ENCODE measurements at regions of chr11 and their contacts with region 1.

Region 1: DNA sequence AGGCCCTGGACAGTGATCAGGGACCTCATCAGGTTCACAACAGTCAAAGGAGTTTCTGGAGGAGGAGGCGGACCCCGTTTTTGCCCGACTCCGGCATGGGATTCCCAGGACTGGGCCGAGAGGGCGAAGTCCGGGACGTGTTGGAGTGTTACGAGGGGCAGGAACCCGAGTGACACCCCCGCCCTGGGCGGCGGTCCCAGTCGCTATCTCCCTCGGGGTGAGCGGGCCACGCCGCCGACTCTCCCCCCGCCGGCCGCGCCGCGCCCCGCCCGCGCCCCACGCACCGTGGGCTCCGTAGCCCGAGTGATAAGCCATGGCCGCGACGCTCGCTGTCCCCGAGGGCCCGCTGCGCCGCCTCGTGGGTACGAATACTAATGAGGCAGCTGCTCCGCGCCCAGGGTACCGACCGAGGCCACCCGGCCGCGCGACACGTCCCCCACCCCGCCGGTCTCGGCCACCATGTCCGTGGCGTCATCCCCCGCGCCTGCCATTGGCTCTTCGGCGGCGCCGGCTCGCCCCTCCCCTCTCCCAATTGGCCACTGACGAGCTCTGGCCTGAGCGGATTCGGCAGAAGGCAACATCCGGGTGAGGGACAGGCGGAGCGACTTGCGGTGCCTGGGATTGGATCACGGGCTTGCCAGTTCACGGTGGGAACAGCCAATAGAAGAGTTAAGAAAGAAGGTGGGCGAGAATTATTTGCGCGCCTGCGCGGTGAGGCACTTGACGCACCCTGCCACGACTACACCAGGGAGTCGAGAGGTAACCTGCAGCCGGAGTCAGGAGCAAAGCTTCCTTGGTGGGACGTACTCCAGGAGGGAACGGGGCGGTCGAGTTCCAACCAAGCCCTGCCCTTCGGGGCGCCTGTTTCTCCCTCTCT is at the start of gene YIF1A:
- DNase-seq: peak; percentile 97 to 100 (median 99)
- H3K4me3 ChIP-seq: peak within 1 kb of the TSS; percentile 68 to 99 (median 91)
- H3K27ac ChIP-seq: peak within 1 kb of the TSS; percentile 89 to 100 (median 99)
- H3K27me3 ChIP-seq: peaks cover 0 to 7% (median 0%) of the 10 kb centered on the region in 45 donors
- CTCF ChIP-seq: peak in 38 of 56 donors; percentile 3 to 65 (median 40)
- total RNA-seq, gene YIF1A: 15.9 to 71.3 (median 33.4) TPM

Region 2: DNA sequence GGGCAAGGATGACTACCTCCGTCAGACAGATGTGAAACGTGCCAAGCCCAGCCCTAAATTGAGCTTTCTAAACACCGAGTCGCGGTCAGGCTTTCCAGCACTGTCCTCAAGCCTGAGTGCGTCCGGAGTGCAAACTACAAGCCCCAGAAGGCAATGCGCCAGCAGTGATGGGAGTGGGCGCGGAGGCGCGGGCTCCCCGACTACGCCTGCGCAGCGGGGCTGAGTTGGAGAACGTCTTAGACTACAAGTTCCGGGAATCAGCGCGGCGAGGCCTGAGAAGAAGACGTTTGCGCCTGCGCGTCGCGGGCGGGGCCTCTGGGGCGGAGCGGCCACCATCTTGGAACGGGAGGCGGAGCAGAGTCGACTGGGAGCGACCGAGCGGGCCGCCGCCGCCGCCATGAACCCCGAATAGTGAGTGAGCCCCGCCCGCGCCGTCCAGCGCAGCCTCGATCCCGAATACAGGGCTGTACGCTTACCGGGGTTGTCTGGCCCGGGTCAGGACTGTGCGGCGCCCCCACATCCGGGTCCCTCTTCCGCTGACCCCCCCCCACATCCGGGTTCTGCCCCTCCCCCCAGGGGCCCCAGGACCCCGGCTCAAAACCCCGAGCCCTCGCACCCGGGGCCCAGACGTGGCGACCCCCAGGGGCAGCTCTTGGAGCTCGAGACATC is 20.5 kb before region 1 on chr11 and contains the start of gene RAB1B:
- intact Hi-C with region 1: loop called (anchors 2 kb)
- DNase-seq: peak; percentile 99 to 100 (median 99)
- H3K4me3 ChIP-seq: peak within 1 kb of the TSS; percentile 65 to 100 (median 91)
- H3K27ac ChIP-seq: peak within 1 kb of the TSS; percentile 89 to 100 (median 98)
- H3K27me3 ChIP-seq: no peaks in the 10 kb centered on the region
- CTCF ChIP-seq: peak in 8 of 56 donors; percentile 3 to 42 (median 12)
- total RNA-seq, gene RAB1B: 94.3 to 135 (median 115) TPM

Region 3: DNA sequence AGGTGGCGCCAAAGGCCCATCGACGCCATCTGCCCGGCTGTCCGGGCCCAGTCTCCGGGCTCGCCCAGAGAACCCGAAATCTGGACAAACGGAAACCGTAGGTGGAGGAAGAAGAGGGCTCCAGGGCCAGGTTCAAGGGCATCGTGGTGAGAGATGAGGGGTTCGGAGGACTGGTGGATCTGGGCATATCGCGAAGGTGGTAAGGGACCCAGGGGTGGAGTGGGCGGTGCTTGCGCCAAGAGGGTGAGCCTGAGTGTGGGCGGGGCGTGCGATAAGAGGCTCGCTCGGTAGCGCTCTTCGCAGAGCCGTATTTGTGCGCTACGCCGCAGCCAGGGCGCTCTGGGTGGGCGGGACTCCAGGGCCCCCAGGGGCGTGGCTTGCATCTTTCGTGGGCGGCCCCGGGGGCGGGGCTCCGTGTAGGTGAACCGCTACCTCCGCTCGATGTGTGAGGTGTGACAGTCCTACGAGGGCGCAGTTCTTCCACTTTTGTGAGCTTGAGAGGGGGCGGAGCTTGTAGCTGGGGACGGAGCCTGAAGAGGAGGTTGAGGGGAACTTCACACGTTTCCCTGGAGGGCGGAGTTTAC is 23.1 kb after region 1 on chr11:
- intact Hi-C with region 1: loop called in 1 of 2 experiments (anchors 1 kb)
- DNase-seq: peak; percentile 68 to 94 (median 88)
- H3K4me3 ChIP-seq: peak overlapping the region; percentile 40 to 84 (median 67)
- H3K27ac ChIP-seq: peak overlapping the region; percentile 26 to 95 (median 86)
- H3K27me3 ChIP-seq: no peaks in the 10 kb centered on the region
- CTCF ChIP-seq: peak in 53 of 56 donors; percentile 4 to 96 (median 85)

Region 4: DNA sequence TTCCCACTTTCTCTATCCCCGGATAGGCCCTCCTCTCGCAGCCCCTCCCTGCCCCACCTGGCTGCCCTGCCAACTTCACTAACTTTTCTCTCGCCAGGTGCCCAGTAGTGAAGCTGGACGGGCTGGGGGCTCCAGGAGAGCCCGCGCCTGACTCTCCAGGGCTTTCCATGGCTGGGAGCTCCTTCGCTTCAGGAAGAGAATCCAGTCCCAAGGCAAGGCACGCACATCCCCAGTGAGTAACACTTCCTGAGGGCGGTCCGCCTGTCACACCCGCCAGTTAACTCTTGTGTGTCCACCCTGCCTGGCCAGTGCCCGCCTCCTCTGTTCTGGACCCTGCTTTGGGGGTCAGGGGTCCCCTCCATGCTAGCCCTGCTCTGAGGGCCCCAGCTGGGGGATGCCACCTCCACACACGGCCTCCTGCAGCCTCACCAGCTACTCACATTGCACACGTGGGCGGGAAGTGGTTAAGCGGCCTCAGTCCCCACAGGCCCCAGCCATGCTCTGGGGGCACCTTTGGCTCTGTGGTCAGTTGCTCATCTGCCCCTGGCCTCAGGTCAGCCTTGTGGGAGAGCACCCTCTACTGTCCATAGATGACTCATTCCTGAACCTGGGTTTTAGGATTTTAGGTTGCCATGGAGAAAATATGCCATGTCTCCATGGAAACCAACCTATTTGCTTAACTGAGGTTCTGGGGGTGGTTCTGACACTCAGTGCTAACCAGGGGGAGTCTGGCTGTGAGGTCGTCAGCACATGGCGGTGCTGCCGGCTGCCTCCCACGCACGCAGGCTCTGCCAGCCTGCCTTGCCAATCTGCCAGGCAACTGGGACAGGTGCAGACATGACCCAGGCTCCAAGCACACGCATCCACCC is 47.6 kb after region 1 on chr11 and contains the start of gene RIN1:
- intact Hi-C with region 1: loop called in 1 of 2 experiments (anchors 5 kb)
- DNase-seq: peak in 9 of 10 donors; percentile 51 to 90 (median 78)
- H3K4me3 ChIP-seq: peak within 1 kb of the TSS in 58 of 59 donors; percentile 21 to 72 (median 61)
- H3K27ac ChIP-seq: peak within 1 kb of the TSS in 57 of 59 donors; percentile 26 to 91 (median 77)
- H3K27me3 ChIP-seq: no peaks in the 10 kb centered on the region
- CTCF ChIP-seq: peak in 50 of 56 donors; percentile 17 to 61 (median 42)
- total RNA-seq, gene RIN1: 4.0 to 30.0 (median 14.9) TPM

Region 5: GRCh38 chr11:66344550-66345315 is 55.8 kb after region 1 on chr11 and contains the start of gene BRMS1:
- intact Hi-C with region 1: loop called (anchors 5 kb)
- DNase-seq: peak; percentile 97 to 100 (median 99)
- H3K4me3 ChIP-seq: peak within 1 kb of the TSS; percentile 59 to 100 (median 94)
- H3K27ac ChIP-seq: peak within 1 kb of the TSS in 58 of 59 donors; percentile 8 to 98 (median 80)
- H3K27me3 ChIP-seq: no peaks in the 10 kb centered on the region
- CTCF ChIP-seq: peak in 53 of 56 donors; percentile 13 to 70 (median 49)
- total RNA-seq, gene BRMS1: 10.3 to 25.1 (median 16.2) TPM

Region 6: DNA sequence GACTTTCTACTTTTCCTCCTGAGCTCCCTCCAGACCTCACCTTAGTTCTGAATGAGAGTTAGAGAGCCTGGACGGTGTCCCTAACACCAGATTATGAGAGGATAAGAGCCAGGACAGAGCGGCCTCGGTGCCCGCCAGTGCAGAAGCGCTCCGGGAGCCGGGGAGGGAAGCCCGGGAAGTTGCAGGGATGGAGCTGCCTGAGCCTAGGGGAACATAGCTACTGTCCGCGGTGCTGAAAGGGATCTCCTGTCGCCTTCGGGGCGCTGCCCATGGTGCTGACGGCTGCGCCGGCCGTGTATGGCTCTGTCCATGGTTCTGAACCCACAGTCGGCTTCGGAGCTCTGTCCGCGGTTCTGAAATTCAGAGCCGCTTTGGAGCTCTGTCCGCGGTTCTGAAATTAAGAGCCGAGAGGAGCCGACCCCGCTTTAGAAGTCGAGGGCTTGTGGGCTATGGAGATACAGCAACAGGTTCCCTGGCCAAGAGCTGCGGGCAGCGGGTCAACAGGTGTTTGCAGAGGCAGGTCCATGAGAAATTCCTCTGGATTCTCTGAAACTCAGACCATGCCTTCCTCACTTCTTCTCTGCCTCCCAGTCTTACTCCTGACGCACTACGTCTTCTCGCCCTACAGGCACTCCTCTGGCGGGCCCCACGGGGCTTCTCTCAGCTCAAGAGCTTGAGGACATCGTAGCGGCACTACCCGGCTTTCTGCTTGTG is 132.7 kb after region 1 on chr11:
- intact Hi-C with region 1: no loop called
- DNase-seq: peak; percentile 48 to 86 (median 80)
- H3K4me3 ChIP-seq: peak overlapping the region in 56 of 59 donors; percentile 4 to 64 (median 48)
- H3K27ac ChIP-seq: peak overlapping the region in 5 of 59 donors; percentile 40 to 61 (median 49)
- H3K27me3 ChIP-seq: peaks cover 0 to 7% (median 0%) of the 10 kb centered on the region in 45 donors
- CTCF ChIP-seq: peak in 37 of 56 donors; percentile 2 to 66 (median 31)

Region 7: GRCh38 chr11:66498506-66498905 is 209.6 kb after region 1 on chr11:
- intact Hi-C with region 1: no loop called
- DNase-seq: no peak
- H3K4me3 ChIP-seq: no peak overlapping the region
- H3K27ac ChIP-seq: no peak overlapping the region
- H3K27me3 ChIP-seq: no peaks in the 10 kb centered on the region
- CTCF ChIP-seq: no peak